GM12878 (cell line): ENCODE measurements at regions of chr18 and their contacts with region 1.

Region 1: GRCh38 chr18:44803019-44803650 is 122.4 kb downstream of the SETBP1 start:
- DNase-seq: no peak
- ATAC-seq: peak; percentile 52
- H3K4me3 ChIP-seq: 0 out of 2 replicates have a peak overlapping the region, but pooled peaks have one; percentile 12
- H3K27ac ChIP-seq: no peak overlapping the region
- H3K4me1 ChIP-seq: peaks cover 43% of the 10 kb centered on the region
- H3K27me3 ChIP-seq: no peaks in the 10 kb centered on the region
- CTCF ChIP-seq: no peak
- EP300 ChIP-seq: no peak
- POLR2A ChIP-seq: no peak
- RAD21 ChIP-seq: no peak

Region 2: GRCh38 chr18:44725300-44726096 is 77.6 kb before region 1 on chr18:
- CTCF ChIA-PET with region 1: interaction called, 6 read pairs
- POLR2A ChIA-PET with region 1: interaction called, 4 read pairs
- RAD21 ChIA-PET with region 1: interaction called, 10 read pairs
- SMC1A ChIA-PET with region 1: interaction called, 14 read pairs
- in situ Hi-C with region 1: no loop called
- intact Hi-C with region 1: loop called (anchors 2 kb)
- DNase-seq: peak; percentile 71
- ATAC-seq: peak; percentile 73
- H3K4me3 ChIP-seq: peak overlapping the region; percentile 33; the same call in 1 of the 2 replicates
- H3K27ac ChIP-seq: peak overlapping the region; percentile 35
- H3K4me1 ChIP-seq: peaks cover 73% of the 10 kb centered on the region
- H3K27me3 ChIP-seq: no peaks in the 10 kb centered on the region
- CTCF ChIP-seq: no peak
- EP300 ChIP-seq: peak; percentile 50 to 89; a peak in 3 of 4 replicates
- POLR2A ChIP-seq: no peak
- RAD21 ChIP-seq: peak; percentile 30; the same call in 1 of the 2 replicates

Region 3: GRCh38 chr18:44786688-44787087 is 16.4 kb before region 1 on chr18:
- CTCF ChIA-PET with region 1: interaction called, 31 read pairs
- POLR2A ChIA-PET with region 1: interaction called, 4 read pairs
- RAD21 ChIA-PET with region 1: interaction called, 9 read pairs
- SMC1A ChIA-PET with region 1: interaction called, 21 read pairs
- in situ Hi-C with region 1: no loop called
- intact Hi-C with region 1: no loop called
- DNase-seq: no peak
- ATAC-seq: peak; percentile 85
- H3K4me3 ChIP-seq: peak overlapping the region; percentile 41; the same call in 1 of the 2 replicates
- H3K27ac ChIP-seq: peak overlapping the region; percentile 64
- H3K4me1 ChIP-seq: peaks cover 20% of the 10 kb centered on the region
- H3K27me3 ChIP-seq: no peaks in the 10 kb centered on the region
- CTCF ChIP-seq: no peak
- EP300 ChIP-seq: no peak
- POLR2A ChIP-seq: no peak
- RAD21 ChIP-seq: no peak

Region 4: GRCh38 chr18:44826418-44827259 is 23.5 kb after region 1 on chr18:
- CTCF ChIA-PET with region 1: interaction called, 4 read pairs
- POLR2A ChIA-PET with region 1: interaction called, 10 read pairs
- RAD21 ChIA-PET with region 1: interaction called, 12 read pairs
- SMC1A ChIA-PET with region 1: interaction called, 43 read pairs
- in situ Hi-C with region 1: no loop called
- intact Hi-C with region 1: loop called (anchors 2 kb)
- DNase-seq: no peak
- ATAC-seq: no peak
- H3K4me3 ChIP-seq: no peak overlapping the region
- H3K27ac ChIP-seq: no peak overlapping the region
- H3K4me1 ChIP-seq: no peaks in the 10 kb centered on the region
- H3K27me3 ChIP-seq: no peaks in the 10 kb centered on the region
- CTCF ChIP-seq: no peak
- EP300 ChIP-seq: no peak
- POLR2A ChIP-seq: no peak
- RAD21 ChIP-seq: no peak

Region 5: GRCh38 chr18:45197526-45197970 is 394.4 kb after region 1 on chr18:
- CTCF ChIA-PET with region 1: no interaction called
- POLR2A ChIA-PET with region 1: no interaction called
- RAD21 ChIA-PET with region 1: interaction called, 3 read pairs
- SMC1A ChIA-PET with region 1: no interaction called
- in situ Hi-C with region 1: no loop called
- intact Hi-C with region 1: loop called (anchors 5 kb)
- DNase-seq: peak; percentile 88
- ATAC-seq: peak; percentile 98
- H3K4me3 ChIP-seq: no peak overlapping the region
- H3K27ac ChIP-seq: peak overlapping the region; percentile 42; the same call in 1 of the 2 replicates
- H3K4me1 ChIP-seq: peaks cover 7% of the 10 kb centered on the region; the same call in 1 of the 2 replicates
- H3K27me3 ChIP-seq: no peaks in the 10 kb centered on the region
- CTCF ChIP-seq: no peak
- EP300 ChIP-seq: peak; percentile 99 to 100
- POLR2A ChIP-seq: no peak
- RAD21 ChIP-seq: no peak